ENCODE measurements at regions of chr6 and their contacts with region 1.

Region 1: DNA sequence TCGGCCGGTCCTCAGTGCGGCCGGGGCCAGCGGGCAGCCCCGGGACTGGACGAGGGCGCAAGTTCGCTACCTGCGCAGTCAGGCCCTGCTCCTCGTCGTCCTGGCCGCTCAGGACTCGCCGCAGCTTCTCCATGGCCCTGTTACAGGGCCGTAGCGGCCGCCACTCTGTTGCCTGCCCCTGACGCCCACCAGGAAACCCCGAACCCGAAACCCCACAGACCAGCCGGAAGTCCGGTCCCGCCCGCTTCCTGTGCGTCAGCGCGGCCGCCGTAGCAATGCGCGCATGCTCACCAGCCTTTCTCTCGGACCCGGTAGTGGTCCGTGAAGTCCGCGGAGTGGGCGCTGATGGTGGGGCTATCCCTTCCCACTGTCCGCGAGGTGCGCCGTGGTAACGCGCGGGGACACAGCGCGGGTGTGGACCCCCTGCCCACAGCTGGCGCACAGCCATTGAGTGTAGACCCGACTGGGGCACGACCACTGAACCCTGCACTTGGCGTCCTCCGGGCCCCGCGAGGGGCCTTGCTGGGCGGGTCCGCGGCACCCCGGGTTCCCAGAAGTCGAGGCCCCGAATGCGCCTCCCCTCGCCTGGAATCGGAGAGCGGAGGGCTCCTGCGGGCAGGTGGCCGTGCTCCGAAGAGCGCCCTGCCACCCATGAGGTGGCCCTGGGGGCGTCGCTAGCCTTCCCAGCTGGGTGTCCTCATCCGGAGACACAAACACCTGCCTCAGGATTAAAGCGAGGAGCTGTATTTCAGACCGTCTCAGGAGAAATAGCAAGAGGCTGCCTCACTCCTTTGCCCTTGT is at the start of gene SFT2D1:
- DNase-seq: peak; percentile 85
- H3K4me3 Mint-ChIP-seq: peak within 1 kb of the TSS; percentile 83
- H3K27ac Mint-ChIP-seq: peak within 1 kb of the TSS; percentile 86
- H3K4me1 Mint-ChIP-seq: peaks cover 11% of the 10 kb centered on the region
- H3K27me3 Mint-ChIP-seq: no peaks in the 10 kb centered on the region
- total RNA-seq, gene SFT2D1: 57.2 to 59.5 TPM

Region 2: GRCh38 chr6:166286839-166287271 is 55.7 kb before region 1 on chr6:
- CTCF ChIA-PET with region 1: no interaction called
- POLR2A ChIA-PET with region 1: no interaction called
- intact Hi-C with region 1: loop called (anchors 5 kb)
- DNase-seq: no peak
- H3K4me3 Mint-ChIP-seq: no peak overlapping the region
- H3K27ac Mint-ChIP-seq: no peak overlapping the region
- H3K4me1 Mint-ChIP-seq: no peaks in the 10 kb centered on the region
- H3K27me3 Mint-ChIP-seq: peaks cover 6% of the 10 kb centered on the region

Region 3: DNA sequence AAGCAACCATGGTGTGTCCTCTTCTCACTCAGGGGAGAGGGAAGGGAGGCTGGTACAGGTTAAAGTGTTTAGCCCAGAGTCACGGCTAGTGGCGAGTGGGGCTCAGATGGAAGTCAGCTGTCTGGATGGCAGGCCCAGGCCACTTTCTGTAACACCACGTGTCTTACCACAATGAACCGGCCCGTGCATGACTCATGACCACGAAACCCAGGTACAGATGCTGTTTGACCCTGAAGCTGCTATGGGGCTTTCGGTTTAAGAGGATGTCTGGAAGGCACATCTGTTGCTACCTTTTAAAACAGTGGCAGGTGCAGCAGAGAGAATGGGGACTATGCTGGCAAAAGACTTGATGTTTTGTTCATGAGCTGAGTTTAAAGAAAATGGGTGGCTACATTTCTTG is 76.7 kb after region 1 on chr6:
- CTCF ChIA-PET with region 1: no interaction called
- POLR2A ChIA-PET with region 1: no interaction called
- intact Hi-C with region 1: loop called (anchors 5 kb)
- DNase-seq: peak; percentile 82
- H3K4me3 Mint-ChIP-seq: peak overlapping the region; percentile 4
- H3K27ac Mint-ChIP-seq: peak overlapping the region; percentile 73
- H3K4me1 Mint-ChIP-seq: peaks cover 62% of the 10 kb centered on the region
- H3K27me3 Mint-ChIP-seq: no peaks in the 10 kb centered on the region

Measured in activated CD4-positive, alpha-beta memory T cell treated with anti-CD3 and anti-CD28 coated beads for 36 hours (primary cell).